IMR-90 (cell line): ENCODE measurements at regions of chr11 and their contacts with region 1.

Region 1: DNA sequence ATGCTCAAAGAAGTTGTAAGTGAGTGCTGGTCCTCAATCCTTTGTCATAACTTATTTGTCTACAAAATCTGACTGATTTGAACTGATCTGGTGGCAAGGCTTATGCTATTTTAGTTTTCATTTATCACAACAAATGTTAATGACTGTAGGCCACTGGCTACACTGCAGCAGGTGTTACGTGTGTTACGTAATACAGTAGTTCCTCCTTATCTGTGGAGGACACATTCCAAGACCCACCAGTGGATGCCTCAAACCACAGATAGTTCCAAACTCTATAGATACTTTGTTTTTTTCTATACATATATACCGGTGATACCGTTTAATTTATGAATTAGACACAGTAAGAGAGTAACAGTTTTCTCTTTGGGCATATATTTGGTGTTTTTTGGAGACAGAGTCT is 7.0 kb downstream of the MADD start:
- DNase-seq: no peak
- ATAC-seq: no peak
- H3K4me3 ChIP-seq: no peak overlapping the region
- H3K27ac ChIP-seq: no peak overlapping the region
- H3K4me1 ChIP-seq: no peaks in the 10 kb centered on the region
- H3K27me3 ChIP-seq: no peaks in the 10 kb centered on the region
- CTCF ChIP-seq: no peak
- POLR2A ChIP-seq: no peak
- RAD21 ChIP-seq: no peak

Region 2: DNA sequence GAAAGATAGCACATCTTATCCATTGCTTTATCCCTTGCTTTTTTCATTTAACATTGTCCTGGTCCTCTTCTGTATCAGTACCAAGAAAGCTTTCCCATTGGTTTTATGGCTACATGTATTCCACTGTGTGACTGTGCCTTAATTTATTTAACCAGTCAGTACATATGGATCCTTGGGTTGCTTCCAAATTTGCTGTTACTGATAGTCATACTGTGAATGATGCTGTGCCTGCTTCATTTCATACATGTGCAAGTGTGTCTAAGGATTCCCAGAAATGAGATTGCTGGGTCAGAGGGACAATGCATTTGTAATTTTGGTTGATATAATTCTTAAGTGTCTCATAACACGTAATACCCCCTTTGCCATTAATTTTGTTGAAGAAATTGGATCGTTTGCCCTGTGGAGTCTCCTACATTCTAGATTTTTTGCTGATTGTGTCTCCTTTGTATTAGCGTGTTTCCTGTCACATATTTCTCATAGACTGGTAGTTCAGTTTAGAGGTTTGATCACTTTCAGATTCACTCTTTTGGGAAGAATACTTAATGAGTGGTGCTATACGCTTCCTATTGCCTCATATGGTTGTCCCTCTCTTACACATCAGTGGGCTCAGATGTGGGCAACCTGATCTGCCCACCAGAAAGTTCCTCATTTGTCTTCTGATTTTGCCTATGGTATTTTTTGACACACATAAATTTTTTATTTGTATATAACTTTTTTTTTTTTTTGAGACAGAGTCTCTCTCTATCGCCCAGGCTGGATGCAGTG is 40.3 kb after region 1 on chr11:
- CTCF ChIA-PET with region 1: no interaction called
- POLR2A ChIA-PET with region 1: no interaction called
- dilution Hi-C with region 1: no loop called
- in situ Hi-C with region 1: no loop called
- intact Hi-C with region 1: loop called (anchors 5 kb)
- DNase-seq: no peak
- ATAC-seq: no peak
- H3K4me3 ChIP-seq: no peak overlapping the region
- H3K27ac ChIP-seq: no peak overlapping the region
- H3K4me1 ChIP-seq: no peaks in the 10 kb centered on the region
- H3K27me3 ChIP-seq: no peaks in the 10 kb centered on the region
- CTCF ChIP-seq: no peak
- POLR2A ChIP-seq: no peak
- RAD21 ChIP-seq: no peak

Region 3: GRCh38 chr11:47348859-47349258 is 71.9 kb after region 1 on chr11:
- CTCF ChIA-PET with region 1: no interaction called
- POLR2A ChIA-PET with region 1: no interaction called
- dilution Hi-C with region 1: no loop called
- in situ Hi-C with region 1: no loop called
- intact Hi-C with region 1: no loop called
- DNase-seq: peak; percentile 22
- ATAC-seq: peak; percentile 75
- H3K4me3 ChIP-seq: no peak overlapping the region
- H3K27ac ChIP-seq: no peak overlapping the region
- H3K4me1 ChIP-seq: no peaks in the 10 kb centered on the region
- H3K27me3 ChIP-seq: peaks cover 28% of the 10 kb centered on the region
- CTCF ChIP-seq: peak; percentile 14; the same call in 1 of the 2 replicates
- POLR2A ChIP-seq: no peak
- RAD21 ChIP-seq: peak; percentile 16; the same call in 1 of the 2 replicates

Region 4: GRCh38 chr11:47407746-47408590 is 131.0 kb after region 1 on chr11 and contains the start of gene SLC39A13:
- CTCF ChIA-PET with region 1: no interaction called
- POLR2A ChIA-PET with region 1: no interaction called
- dilution Hi-C with region 1: no loop called
- in situ Hi-C with region 1: no loop called
- intact Hi-C with region 1: no loop called
- DNase-seq: peak; percentile 95
- ATAC-seq: peak; percentile 85
- H3K4me3 ChIP-seq: peak within 1 kb of the TSS; percentile 82
- H3K27ac ChIP-seq: peak within 1 kb of the TSS; percentile 98
- H3K4me1 ChIP-seq: peaks cover 22% of the 10 kb centered on the region
- H3K27me3 ChIP-seq: no peaks in the 10 kb centered on the region
- CTCF ChIP-seq: peak; percentile 97
- POLR2A ChIP-seq: peak; percentile 76
- RAD21 ChIP-seq: peak; percentile 85
- total RNA-seq, gene SLC39A13: 29.2 and 32.4 TPM in 2 replicates

Region 5: GRCh38 chr11:47611348-47611794 is 334.4 kb after region 1 on chr11:
- CTCF ChIA-PET with region 1: no interaction called
- POLR2A ChIA-PET with region 1: no interaction called
- dilution Hi-C with region 1: no loop called
- in situ Hi-C with region 1: no loop called
- intact Hi-C with region 1: no loop called
- DNase-seq: no peak
- ATAC-seq: no peak
- H3K4me3 ChIP-seq: no peak overlapping the region
- H3K27ac ChIP-seq: no peak overlapping the region
- H3K4me1 ChIP-seq: peaks cover 8% of the 10 kb centered on the region
- H3K27me3 ChIP-seq: no peaks in the 10 kb centered on the region
- CTCF ChIP-seq: no peak
- POLR2A ChIP-seq: no peak
- RAD21 ChIP-seq: no peak